Naive thymus-derived CD8-positive, alpha-beta T cell (primary cell): ENCODE measurements at regions of chr6 and their contacts with region 1.

Region 1: DNA sequence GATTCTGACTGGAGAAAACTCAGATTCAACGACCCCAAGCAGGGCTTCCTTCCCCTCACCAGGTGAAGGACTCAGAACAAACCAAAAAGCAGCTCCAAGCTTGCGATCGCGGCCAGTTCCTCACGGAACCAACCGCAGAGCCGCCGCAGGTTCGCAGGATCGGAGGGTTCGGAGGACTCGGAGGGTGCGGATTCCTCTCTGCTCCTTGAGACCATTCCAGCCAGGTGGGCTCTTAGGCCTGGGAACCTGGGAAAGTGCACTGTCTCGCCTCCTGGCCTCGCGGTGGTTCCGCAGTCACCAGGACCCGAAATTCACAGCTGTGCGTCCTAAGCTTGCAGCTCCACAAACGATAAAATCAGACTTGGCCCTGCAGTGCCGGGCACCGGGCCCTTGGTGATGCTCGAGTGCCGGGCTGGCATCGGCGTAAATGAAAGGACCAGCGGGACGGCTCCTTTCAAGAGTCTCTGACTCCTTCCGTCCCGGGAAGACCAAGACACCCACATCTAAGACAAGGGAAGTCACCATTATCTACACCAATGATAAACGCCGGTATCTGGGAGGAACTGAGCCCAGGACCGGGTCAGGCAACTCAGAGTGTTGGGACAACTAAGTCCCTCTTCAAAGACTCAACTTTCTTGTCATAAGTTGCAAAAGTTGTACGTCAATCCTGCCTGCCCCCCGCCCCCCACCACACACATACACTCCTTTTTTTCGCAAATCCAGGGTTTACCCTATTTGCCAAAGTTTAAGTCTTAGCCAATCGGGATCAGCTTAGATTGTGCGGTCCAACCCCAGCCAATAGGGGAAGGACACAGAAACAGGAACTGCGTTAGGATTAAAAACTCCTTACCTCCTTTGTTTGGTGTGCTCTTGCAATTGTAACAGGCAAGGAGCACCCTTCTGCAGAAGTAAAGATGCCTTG is 69.8 kb upstream of the PRSS16 start:
- DNase-seq: peak; percentile 52 to 83 (median 66)
- ATAC-seq: peak; percentile 76 to 82
- H3K4me3 Mint-ChIP-seq: peak overlapping the region; percentile 90 to 98 (median 97)
- H3K27ac Mint-ChIP-seq: peak overlapping the region; percentile 86 to 99 (median 92)
- H3K4me1 Mint-ChIP-seq: peaks cover 3 to 23% (median 16%) of the 10 kb centered on the region in 4 donors
- H3K27me3 Mint-ChIP-seq: peaks cover 0 to 7% (median 2%) of the 10 kb centered on the region in 5 donors

Region 2: DNA sequence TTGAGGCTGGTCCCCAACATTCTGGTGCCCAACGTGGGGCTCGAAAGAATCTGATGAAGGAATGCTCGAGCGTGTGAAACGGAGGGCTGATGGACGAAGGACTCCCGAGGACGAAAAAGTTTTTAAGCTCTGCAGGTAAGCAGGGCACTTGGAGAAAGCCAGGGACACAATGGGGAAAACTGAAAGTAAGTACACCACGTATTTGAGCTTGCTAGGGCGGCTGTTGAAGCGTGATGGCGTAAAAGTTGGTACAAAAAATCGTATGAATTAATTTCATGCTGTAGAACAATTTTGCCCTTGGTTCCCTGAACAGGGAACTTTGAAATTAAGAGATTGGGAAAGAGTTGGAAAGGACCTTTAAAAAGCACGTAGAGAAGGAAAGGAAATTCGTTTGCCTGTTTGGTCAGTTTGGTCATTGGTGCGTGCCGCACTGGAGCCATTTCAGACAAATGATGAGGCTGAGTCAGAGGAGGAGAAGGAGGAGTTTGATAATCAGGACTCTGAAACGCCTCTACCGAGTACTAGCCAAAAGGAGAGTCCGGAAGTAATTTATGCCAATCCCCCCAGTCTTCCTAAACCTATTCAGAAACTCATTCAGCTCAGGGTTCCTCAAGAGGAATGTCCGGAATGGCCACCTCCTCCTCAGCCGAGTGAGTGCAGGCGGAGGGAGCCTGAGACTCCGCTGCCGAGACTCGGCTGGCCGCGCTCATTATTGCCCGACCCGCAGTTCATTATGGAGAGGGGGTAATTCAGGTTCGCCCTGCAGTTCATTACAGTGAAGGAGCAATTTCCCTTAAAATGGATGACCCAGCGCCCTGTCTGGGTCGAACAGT is 10.5 kb after region 1 on chr6:
- POLR2A ChIA-PET with region 1: interaction called, 10 read pairs
- DNase-seq: peak in 5 of 10 donors; percentile 1 to 30 (median 19)
- ATAC-seq: peak; percentile 77 to 87
- H3K4me3 Mint-ChIP-seq: peak overlapping the region; percentile 89 to 99 (median 93)
- H3K27ac Mint-ChIP-seq: peak overlapping the region; percentile 6 to 85 (median 62)
- H3K4me1 Mint-ChIP-seq: peaks cover 8 to 17% (median 16%) of the 10 kb centered on the region in 4 donors
- H3K27me3 Mint-ChIP-seq: peaks cover 0 to 3% (median 0%) of the 10 kb centered on the region in 5 donors

Region 3: DNA sequence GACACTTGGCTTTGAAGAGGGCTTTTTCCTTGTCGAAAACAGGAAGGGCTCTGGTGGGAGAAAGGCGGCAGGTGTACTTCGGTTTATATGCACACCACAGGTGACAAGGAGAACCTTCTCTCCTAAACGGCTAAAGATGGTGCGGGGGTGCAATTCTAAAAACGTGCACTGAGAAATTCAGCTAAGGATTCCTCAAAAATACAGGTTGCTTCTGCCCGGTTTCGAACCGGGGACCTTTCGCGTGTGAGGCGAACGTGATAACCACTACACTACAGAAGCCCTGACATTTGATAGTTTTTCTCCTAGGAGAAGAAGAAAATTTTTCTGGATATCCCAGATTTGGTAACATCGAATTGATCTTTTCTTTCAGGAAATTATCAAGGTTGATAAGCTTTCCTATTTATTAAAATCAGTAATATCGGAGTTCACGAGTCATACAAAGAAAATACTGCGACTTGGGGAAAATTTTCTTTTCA is 102.4 kb after region 1 on chr6:
- POLR2A ChIA-PET with region 1: no interaction called
- DNase-seq: no peak
- ATAC-seq: no peak
- H3K4me3 Mint-ChIP-seq: peak overlapping the region in 4 of 10 donors; percentile 6 to 59 (median 35)
- H3K27ac Mint-ChIP-seq: peak overlapping the region in 2 of 10 donors; percentile 78 to 85
- H3K4me1 Mint-ChIP-seq: peaks cover 0 to 6% (median 2%) of the 10 kb centered on the region in 4 donors
- H3K27me3 Mint-ChIP-seq: peaks cover 48 to 100% (median 86%) of the 10 kb centered on the region in 5 donors

Region 4: GRCh38 chr6:27553123-27553904 is 375.6 kb after region 1 on chr6:
- POLR2A ChIA-PET with region 1: no interaction called
- DNase-seq: no peak
- ATAC-seq: peak in 1 of 2 donors; percentile 20
- H3K4me3 Mint-ChIP-seq: peak overlapping the region in 2 of 10 donors; percentile 8 to 11
- H3K27ac Mint-ChIP-seq: peak overlapping the region in 1 of 10 donors; percentile 45
- H3K4me1 Mint-ChIP-seq: peaks cover 2 to 4% (median 3%) of the 10 kb centered on the region in 4 donors
- H3K27me3 Mint-ChIP-seq: peaks cover 56 to 95% (median 78%) of the 10 kb centered on the region in 5 donors